B cell (primary cell): ENCODE measurements at regions of chr7 and their contacts with region 1.

Region 1: DNA sequence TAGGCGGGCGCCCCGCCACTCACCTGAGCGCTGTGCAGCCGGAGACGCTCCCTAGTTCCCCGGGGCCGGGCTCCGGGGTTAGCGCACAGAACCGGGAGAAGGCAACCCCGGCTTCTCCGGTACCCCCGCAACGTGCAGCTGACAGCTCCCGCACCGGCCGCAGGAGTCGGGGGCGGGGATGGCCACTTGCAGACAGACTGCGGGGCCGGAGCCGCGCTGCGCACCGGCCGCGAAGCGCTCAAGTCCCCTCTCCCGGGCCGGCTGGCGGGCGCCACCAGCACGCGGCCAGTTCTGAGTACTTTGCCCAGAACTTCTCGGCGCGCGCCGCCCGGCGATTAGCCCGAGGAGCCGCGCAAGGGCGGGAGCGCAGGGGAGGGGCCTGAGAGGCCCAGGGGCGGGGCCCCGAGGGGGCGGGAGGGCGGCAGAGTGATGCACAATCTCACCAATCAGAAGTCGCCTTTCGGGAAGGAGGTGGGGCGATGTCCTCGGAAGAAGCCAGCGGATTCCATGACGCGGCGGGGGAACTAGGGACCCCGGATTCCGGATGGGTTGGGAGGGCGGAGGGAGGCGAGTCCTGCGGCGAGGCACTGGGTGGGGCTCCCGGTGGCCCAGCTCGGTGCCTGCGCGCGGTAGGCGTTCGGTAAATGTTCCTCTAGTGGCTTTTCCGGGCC is at the start of gene OSBPL3:
- DNase-seq: peak; percentile 96
- ATAC-seq: peak; percentile 89
- H3K4me3 ChIP-seq: peak within 1 kb of the TSS; percentile 73 to 97 (median 87)
- H3K4me3 Mint-ChIP-seq: peak within 1 kb of the TSS; percentile 95
- H3K27ac ChIP-seq: peak within 1 kb of the TSS; percentile 55 to 78
- H3K27ac Mint-ChIP-seq: peak within 1 kb of the TSS; percentile 96
- H3K4me1 ChIP-seq: peaks cover 17 to 27% of the 10 kb centered on the region in 2 donors
- H3K4me1 Mint-ChIP-seq: peaks cover 52% of the 10 kb centered on the region
- H3K27me3 ChIP-seq: no peaks in the 10 kb centered on the region
- H3K27me3 Mint-ChIP-seq: no peaks in the 10 kb centered on the region
- CTCF ChIP-seq: no peak
- total RNA-seq, gene OSBPL3: 67.6 and 80.6 TPM in 2 replicates

Region 2: DNA sequence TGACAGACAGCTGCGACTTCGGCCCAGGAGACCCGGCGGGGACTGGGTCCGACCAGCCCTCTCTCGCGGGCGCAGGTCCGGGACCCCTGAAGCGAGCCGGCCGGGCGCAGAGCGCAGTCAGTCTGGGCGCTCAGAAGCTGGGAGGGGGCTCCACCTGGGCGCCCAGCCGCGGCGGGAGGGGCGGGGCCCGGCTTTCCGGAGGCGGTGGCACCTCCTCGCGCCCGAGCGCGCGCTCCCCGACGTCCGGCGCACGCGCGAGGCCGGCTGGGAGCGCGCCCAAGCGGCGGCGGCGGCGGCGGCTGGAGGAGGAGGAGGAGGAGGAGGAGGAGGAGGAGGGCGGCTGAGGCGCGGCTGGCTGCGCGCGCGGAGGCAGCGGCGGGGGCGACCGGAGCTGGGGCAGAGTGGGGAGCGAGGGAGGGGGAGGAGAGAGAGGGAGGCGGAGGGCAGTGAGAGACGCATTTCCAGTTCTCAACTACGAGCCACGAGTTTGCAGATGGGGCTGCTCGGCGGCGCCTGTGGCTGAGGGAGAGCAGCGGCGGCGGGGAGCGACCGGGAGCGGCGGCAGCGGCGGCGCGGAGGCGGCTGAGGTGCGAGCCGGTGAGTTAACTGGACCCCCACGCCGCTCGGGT is 406.9 kb before region 1 on chr7 and contains the start of gene PALS2:
- CTCF ChIA-PET with region 1: no interaction called
- POLR2A ChIA-PET with region 1: no interaction called
- intact Hi-C with region 1: loop called (anchors 5 kb)
- DNase-seq: peak; percentile 90
- ATAC-seq: peak; percentile 79
- H3K4me3 ChIP-seq: peak within 1 kb of the TSS; percentile 63 to 88 (median 84)
- H3K4me3 Mint-ChIP-seq: peak within 1 kb of the TSS; percentile 91
- H3K27ac ChIP-seq: peak within 1 kb of the TSS; percentile 70 to 73
- H3K27ac Mint-ChIP-seq: peak within 1 kb of the TSS; percentile 89
- H3K4me1 ChIP-seq: peaks cover 24 to 29% of the 10 kb centered on the region in 2 donors
- H3K4me1 Mint-ChIP-seq: peaks cover 37% of the 10 kb centered on the region
- H3K27me3 ChIP-seq: peaks cover 0 to 3% (median 0%) of the 10 kb centered on the region in 4 experiments
- H3K27me3 Mint-ChIP-seq: peaks cover 5% of the 10 kb centered on the region
- CTCF ChIP-seq: no peak
- total RNA-seq, gene PALS2: 47.8 and 54.2 TPM in 2 replicates

Region 3: DNA sequence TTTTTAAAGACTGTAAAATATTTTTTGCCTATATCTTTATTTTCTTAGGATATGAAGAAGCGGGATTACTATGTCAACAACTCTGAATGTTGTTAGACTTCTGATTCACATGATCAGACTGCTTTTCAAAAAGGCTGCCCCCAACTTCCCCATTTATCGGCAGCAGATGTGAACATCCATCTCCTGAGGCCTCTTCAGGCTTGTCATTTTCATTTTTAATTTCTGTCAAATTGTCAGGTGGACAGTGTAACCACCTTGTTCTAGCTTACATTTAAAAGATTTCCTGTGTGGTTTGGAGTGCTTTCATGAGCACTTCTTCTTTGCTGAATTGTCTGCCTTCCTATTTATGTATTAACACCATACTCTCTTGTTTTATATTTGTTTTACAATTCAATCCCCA is 143.9 kb before region 1 on chr7:
- CTCF ChIA-PET with region 1: interaction called, 8 read pairs
- POLR2A ChIA-PET with region 1: interaction called, 15 read pairs
- intact Hi-C with region 1: loop called (anchors 1 kb)
- DNase-seq: peak; percentile 89
- ATAC-seq: peak; percentile 80
- H3K4me3 ChIP-seq: peak overlapping the region in 1 of 5 experiments; percentile 46
- H3K4me3 Mint-ChIP-seq: peak overlapping the region; percentile 80
- H3K27ac ChIP-seq: peak overlapping the region; percentile 97
- H3K27ac Mint-ChIP-seq: peak overlapping the region; percentile 98
- H3K4me1 ChIP-seq: peaks cover 72 to 74% of the 10 kb centered on the region in 2 donors
- H3K4me1 Mint-ChIP-seq: peaks cover 75% of the 10 kb centered on the region
- H3K27me3 ChIP-seq: no peaks in the 10 kb centered on the region
- H3K27me3 Mint-ChIP-seq: no peaks in the 10 kb centered on the region
- CTCF ChIP-seq: no peak

Region 4: GRCh38 chr7:24896031-24896501 is 83.9 kb before region 1 on chr7:
- CTCF ChIA-PET with region 1: interaction called, 5 read pairs
- POLR2A ChIA-PET with region 1: no interaction called
- intact Hi-C with region 1: loop called (anchors 5 kb)
- DNase-seq: peak; percentile 69
- ATAC-seq: peak; percentile 90
- H3K4me3 ChIP-seq: no peak overlapping the region
- H3K4me3 Mint-ChIP-seq: no peak overlapping the region
- H3K27ac ChIP-seq: peak overlapping the region in 1 of 2 donors; percentile 51
- H3K27ac Mint-ChIP-seq: peak overlapping the region; percentile 76
- H3K4me1 ChIP-seq: peaks cover 33 to 36% of the 10 kb centered on the region in 2 donors
- H3K4me1 Mint-ChIP-seq: peaks cover 55% of the 10 kb centered on the region
- H3K27me3 ChIP-seq: no peaks in the 10 kb centered on the region
- H3K27me3 Mint-ChIP-seq: no peaks in the 10 kb centered on the region
- CTCF ChIP-seq: peak; percentile 22

Region 5: DNA sequence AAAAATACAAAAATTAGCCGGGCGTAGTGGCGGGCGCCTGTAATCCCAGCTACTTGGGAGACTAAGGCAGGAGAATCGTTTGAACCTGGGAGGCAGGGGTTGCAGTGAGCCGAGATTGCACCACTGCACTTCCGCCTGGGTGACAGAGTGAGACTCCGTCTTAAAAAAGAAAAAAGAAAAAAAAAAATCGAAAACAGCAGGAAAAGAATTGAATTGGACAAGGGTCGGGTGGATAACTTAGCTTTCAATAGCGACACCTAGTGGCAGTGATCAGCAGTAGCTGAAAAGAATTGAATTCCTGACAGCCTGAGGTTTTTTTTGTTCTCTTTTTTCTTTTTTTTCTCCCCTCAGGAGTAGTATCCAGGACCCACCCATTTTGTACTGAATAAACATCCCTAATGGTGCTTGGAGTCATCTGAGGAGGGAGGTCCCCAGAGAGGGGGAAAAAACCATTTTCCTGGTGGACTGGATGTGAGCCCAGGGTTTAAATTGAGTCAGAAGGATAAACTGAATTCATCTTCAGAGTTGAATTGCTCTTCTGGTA is 90.0 kb after region 1 on chr7:
- CTCF ChIA-PET with region 1: interaction called, 25 read pairs
- POLR2A ChIA-PET with region 1: no interaction called
- intact Hi-C with region 1: loop called (anchors 1 kb)
- DNase-seq: peak; percentile 76
- ATAC-seq: peak; percentile 51
- H3K4me3 ChIP-seq: no peak overlapping the region
- H3K4me3 Mint-ChIP-seq: no peak overlapping the region
- H3K27ac ChIP-seq: no peak overlapping the region
- H3K27ac Mint-ChIP-seq: no peak overlapping the region
- H3K4me1 ChIP-seq: peaks cover 0 to 2% of the 10 kb centered on the region in 2 donors
- H3K4me1 Mint-ChIP-seq: peaks cover 2% of the 10 kb centered on the region
- H3K27me3 ChIP-seq: no peaks in the 10 kb centered on the region
- H3K27me3 Mint-ChIP-seq: no peaks in the 10 kb centered on the region
- CTCF ChIP-seq: peak; percentile 95

Region 6: GRCh38 chr7:25179771-25180591 is 200.0 kb after region 1 on chr7:
- CTCF ChIA-PET with region 1: no interaction called
- POLR2A ChIA-PET with region 1: no interaction called
- intact Hi-C with region 1: loop called (anchors 1 kb)
- DNase-seq: peak; percentile 97
- ATAC-seq: peak; percentile 99
- H3K4me3 ChIP-seq: peak overlapping the region; percentile 44 to 77 (median 74)
- H3K4me3 Mint-ChIP-seq: peak overlapping the region; percentile 90
- H3K27ac ChIP-seq: peak overlapping the region; percentile 92 to 94
- H3K27ac Mint-ChIP-seq: peak overlapping the region; percentile 96
- H3K4me1 ChIP-seq: peaks cover 7 to 15% of the 10 kb centered on the region in 2 donors
- H3K4me1 Mint-ChIP-seq: peaks cover 17% of the 10 kb centered on the region
- H3K27me3 ChIP-seq: peaks cover 0 to 3% (median 0%) of the 10 kb centered on the region in 4 experiments
- H3K27me3 Mint-ChIP-seq: peaks cover 4% of the 10 kb centered on the region
- CTCF ChIP-seq: peak; percentile 87